HepG2 (cell line): ENCODE measurements at regions of chr19 and their contacts with region 1.

Region 1: GRCh38 chr19:9934132-9934950 is 2.0 kb downstream of the OLFM2 start:
- DNase-seq: peak; percentile 40
- ATAC-seq: peak; percentile 56
- H3K4me3 ChIP-seq: no peak overlapping the region
- H3K27ac ChIP-seq: no peak overlapping the region
- H3K4me1 ChIP-seq: peaks cover 7% of the 10 kb centered on the region
- H3K27me3 ChIP-seq: peaks cover 0 to 21% of the 10 kb centered on the region in 2 experiments; a peak in 3 of 5 replicates
- CTCF ChIP-seq: peak; percentile 94
- EP300 ChIP-seq: no peak
- POLR2A ChIP-seq: no peak
- RAD21 ChIP-seq: peak; percentile 94

Region 2: GRCh38 chr19:10001899-10002298 is 67.6 kb after region 1 on chr19:
- CTCF ChIA-PET with region 1: interaction called, 7 read pairs
- POLR2A ChIA-PET with region 1: no interaction called
- in situ Hi-C with region 1: no loop called
- intact Hi-C with region 1: loop called (anchors 2 kb)
- DNase-seq: peak; percentile 63
- ATAC-seq: peak; percentile 89
- H3K4me3 ChIP-seq: no peak overlapping the region
- H3K27ac ChIP-seq: no peak overlapping the region
- H3K4me1 ChIP-seq: peaks cover 12% of the 10 kb centered on the region
- H3K27me3 ChIP-seq: peaks cover 0 to 9% of the 10 kb centered on the region in 2 experiments; a peak in 2 of 5 replicates
- CTCF ChIP-seq: peak; percentile 91
- EP300 ChIP-seq: peak in 1 of 2 experiments; percentile 57; a peak in 2 of 4 replicates
- POLR2A ChIP-seq: no peak
- RAD21 ChIP-seq: peak; percentile 43; the same call in 1 of the 2 replicates

Region 3: DNA sequence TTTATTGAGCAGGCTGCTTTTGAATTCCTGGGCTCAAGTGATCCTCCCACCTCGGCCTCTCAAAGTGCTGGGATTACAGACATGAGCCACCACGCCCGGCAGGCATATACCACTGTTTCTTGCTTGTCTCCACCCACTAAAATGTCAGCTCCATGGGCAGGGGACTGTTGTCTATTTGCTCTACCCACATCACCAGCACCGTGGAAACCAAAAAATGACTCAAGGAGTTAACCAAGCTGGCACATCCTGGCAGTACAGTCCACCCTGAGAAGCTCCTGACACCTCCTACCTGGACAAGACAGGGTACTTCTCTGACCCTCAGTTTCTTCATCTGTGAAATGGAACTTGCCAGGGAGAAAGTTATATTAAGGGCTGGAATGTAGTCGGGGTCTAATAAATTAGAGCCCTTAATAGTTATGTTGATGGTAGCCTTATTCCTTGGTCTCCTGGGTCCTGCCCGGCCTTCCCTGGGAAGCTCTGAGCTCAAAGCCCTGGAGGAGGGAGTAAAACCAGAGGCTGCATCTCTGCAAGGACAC is 92.9 kb after region 1 on chr19:
- CTCF ChIA-PET with region 1: interaction called, 34 read pairs
- POLR2A ChIA-PET with region 1: no interaction called
- in situ Hi-C with region 1: loop called (anchors 5 kb)
- intact Hi-C with region 1: loop called (anchors 1 kb)
- DNase-seq: no peak
- ATAC-seq: peak; percentile 17; the same call in 2 of the 3 replicates
- H3K4me3 ChIP-seq: no peak overlapping the region; a peak in 1 of 6 replicates
- H3K27ac ChIP-seq: no peak overlapping the region
- H3K4me1 ChIP-seq: peaks cover 6% of the 10 kb centered on the region
- H3K27me3 ChIP-seq: peaks cover 5 to 36% of the 10 kb centered on the region in 2 experiments
- CTCF ChIP-seq: no peak
- EP300 ChIP-seq: no peak
- POLR2A ChIP-seq: no peak
- RAD21 ChIP-seq: no peak

Region 4: DNA sequence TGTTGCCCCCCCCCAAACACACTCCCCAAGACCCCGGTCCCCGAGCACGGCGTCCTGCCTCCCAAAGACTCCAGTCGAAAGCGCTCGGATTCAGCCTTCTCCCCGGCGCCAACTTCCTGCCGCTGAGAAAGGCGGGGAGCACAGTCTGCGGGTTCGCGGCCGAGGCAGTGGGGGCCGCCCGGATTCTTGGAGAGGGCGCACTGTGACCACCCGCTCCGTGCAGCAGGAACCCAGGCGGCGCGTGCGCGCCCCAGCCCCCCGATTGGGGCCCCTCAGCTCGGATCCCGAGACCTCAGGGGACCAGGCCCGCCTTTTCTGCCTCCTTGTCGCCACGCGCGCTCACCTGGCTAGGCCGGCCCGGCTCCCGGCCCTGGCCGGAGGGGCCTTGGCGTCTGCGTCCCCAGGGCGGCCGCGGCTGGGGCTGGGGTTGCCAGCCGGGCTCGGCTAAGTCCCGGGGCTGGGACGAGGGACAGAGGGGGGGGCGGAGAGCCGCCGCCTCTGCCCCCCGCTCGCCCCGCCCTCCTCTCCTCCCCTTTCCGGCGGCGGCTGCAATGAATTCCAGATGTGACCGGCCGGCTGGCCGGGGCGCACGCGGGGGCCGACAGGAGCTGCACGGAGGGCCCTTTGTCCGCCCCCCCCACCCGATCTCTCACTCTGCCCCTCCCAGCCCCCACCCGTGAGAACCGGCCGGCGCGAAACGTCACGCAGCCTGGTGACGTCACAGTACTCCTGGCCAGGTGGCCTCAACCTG is 296.7 kb after region 1 on chr19 and contains the start of gene S1PR2:
- CTCF ChIA-PET with region 1: no interaction called
- POLR2A ChIA-PET with region 1: no interaction called
- in situ Hi-C with region 1: loop called (anchors 10 kb)
- intact Hi-C with region 1: no loop called
- DNase-seq: peak; percentile 36
- ATAC-seq: peak; percentile 71
- H3K4me3 ChIP-seq: peak within 1 kb of the TSS; percentile 72 to 77 (median 74)
- H3K27ac ChIP-seq: no peak within 1 kb of the TSS
- H3K4me1 ChIP-seq: peaks cover 40% of the 10 kb centered on the region
- H3K27me3 ChIP-seq: peaks cover 2 to 11% of the 10 kb centered on the region in 2 experiments; a peak in 4 of 5 replicates
- CTCF ChIP-seq: no peak
- EP300 ChIP-seq: no peak
- POLR2A ChIP-seq: no peak
- RAD21 ChIP-seq: no peak
- total RNA-seq, gene S1PR2: 0.93 and 1.3 TPM in 2 replicates

Region 5: DNA sequence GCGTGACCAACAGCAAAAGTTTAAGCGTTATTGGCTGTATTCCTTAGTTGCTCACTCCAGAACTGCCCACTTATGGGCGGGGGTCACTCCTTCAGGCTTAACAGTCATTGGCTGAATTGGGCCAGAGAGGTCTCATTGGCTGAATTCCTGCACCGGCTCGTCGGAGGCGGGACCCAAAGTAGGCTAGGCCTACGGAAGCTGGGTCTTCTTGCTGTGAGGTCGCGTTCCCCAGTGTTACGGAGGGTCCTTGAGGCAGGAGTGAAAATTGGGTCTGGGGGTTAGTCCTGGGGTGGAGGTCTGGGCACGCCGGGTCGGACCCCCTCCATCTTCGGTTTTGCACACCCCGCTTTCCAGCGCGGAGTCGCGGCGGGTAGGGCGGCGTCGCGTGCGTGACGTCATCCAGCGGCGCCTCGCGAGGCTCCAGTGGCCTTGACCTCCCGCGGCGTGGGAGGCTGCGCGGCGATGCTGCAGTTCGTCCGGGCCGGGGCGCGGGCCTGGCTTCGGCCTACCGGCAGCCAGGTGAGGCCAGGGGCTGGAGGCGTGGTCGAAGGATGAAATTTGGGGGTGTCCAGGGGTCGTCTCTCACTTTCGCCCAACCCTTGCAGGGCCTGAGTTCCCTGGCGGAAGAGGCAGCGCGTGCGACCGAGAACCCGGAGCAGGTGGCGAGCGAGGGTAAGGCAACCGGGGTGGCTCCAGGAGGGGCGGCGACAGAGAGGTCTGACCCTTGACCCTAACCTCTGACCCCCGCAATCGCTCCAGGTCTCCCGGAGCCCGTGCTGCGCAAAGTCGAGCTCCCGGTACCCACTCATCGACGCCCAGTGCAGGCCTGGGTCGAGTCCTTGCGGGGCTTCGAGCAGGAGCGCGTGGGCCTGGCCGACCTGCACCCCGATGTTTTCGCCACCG is 317.7 kb after region 1 on chr19 and contains the start of gene MRPL4:
- CTCF ChIA-PET with region 1: interaction called, 7 read pairs
- POLR2A ChIA-PET with region 1: no interaction called
- in situ Hi-C with region 1: no loop called
- intact Hi-C with region 1: loop called (anchors 5 kb)
- DNase-seq: peak; percentile 99
- ATAC-seq: peak; percentile 96
- H3K4me3 ChIP-seq: peak within 1 kb of the TSS; percentile 64 to 93 (median 88)
- H3K27ac ChIP-seq: peak within 1 kb of the TSS; percentile 80
- H3K4me1 ChIP-seq: peaks cover 42% of the 10 kb centered on the region
- H3K27me3 ChIP-seq: no peaks in the 10 kb centered on the region; a peak in 1 of 5 replicates
- CTCF ChIP-seq: no peak
- EP300 ChIP-seq: peak in 1 of 2 experiments; percentile 27; a peak in 1 of 4 replicates
- POLR2A ChIP-seq: peak; percentile 81 to 87
- RAD21 ChIP-seq: peak; percentile 50
- total RNA-seq, gene MRPL4: 36.7 and 40.6 TPM in 2 replicates

Region 6: DNA sequence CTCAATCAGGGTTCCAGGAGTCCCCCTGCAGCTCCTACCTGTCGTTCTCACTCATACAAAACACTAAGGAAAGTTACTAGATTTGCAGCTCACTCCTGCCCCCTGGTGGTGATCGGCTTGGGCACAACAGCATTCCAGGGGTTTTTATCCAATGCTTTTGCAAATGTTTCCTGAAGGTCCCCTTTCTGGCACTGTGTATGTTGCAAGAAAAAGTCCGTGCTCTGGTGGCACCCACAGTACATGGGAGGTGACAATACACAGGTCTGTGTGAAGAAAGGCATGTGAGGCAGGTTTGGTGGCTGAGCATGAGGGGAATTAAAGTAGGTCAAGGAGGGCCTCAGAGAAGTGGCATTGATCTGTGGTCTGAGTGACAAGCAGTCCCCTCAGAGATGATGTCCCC is 454.6 kb after region 1 on chr19:
- CTCF ChIA-PET with region 1: interaction called, 5 read pairs
- POLR2A ChIA-PET with region 1: no interaction called
- in situ Hi-C with region 1: loop called (anchors 10 kb)
- intact Hi-C with region 1: no loop called
- DNase-seq: peak; percentile 80
- ATAC-seq: peak; percentile 63
- H3K4me3 ChIP-seq: no peak overlapping the region
- H3K27ac ChIP-seq: no peak overlapping the region
- H3K4me1 ChIP-seq: peaks cover 20% of the 10 kb centered on the region
- H3K27me3 ChIP-seq: no peaks in the 10 kb centered on the region
- CTCF ChIP-seq: peak; percentile 90
- EP300 ChIP-seq: no peak
- POLR2A ChIP-seq: 0 out of 4 replicates have a peak, but pooled peaks of 1 of the 2 experiments have one; percentile 23
- RAD21 ChIP-seq: peak; percentile 70